ENCODE measurements at regions of chr2 and their contacts with region 1.

Region 1: GRCh38 chr2:112254466-112255239 is at the start of gene ZC3H8:
- DNase-seq: peak; percentile 95 to 98 (median 98)
- ATAC-seq: peak; percentile 99
- H3K4me3 ChIP-seq: peak within 1 kb of the TSS; percentile 58
- H3K27ac ChIP-seq: peak within 1 kb of the TSS; percentile 57
- H3K4me1 ChIP-seq: no peaks in the 10 kb centered on the region
- H3K27me3 ChIP-seq: no peaks in the 10 kb centered on the region
- total RNA-seq, gene ZC3H8: 6.0 to 17.2 (median 12.1) TPM

Region 2: GRCh38 chr2:112121682-112122254 is 132.9 kb before region 1 on chr2:
- intact Hi-C with region 1: loop called in 1 of 4 experiments (anchors 10 kb)
- DNase-seq: no peak
- ATAC-seq: no peak
- H3K4me3 ChIP-seq: no peak overlapping the region
- H3K27ac ChIP-seq: no peak overlapping the region
- H3K4me1 ChIP-seq: no peaks in the 10 kb centered on the region
- H3K27me3 ChIP-seq: no peaks in the 10 kb centered on the region

Measured in right cardiac atrium (tissue), 5 donors.